ENCODE measurements at regions of chr20 and their contacts with region 1.

Region 1: DNA sequence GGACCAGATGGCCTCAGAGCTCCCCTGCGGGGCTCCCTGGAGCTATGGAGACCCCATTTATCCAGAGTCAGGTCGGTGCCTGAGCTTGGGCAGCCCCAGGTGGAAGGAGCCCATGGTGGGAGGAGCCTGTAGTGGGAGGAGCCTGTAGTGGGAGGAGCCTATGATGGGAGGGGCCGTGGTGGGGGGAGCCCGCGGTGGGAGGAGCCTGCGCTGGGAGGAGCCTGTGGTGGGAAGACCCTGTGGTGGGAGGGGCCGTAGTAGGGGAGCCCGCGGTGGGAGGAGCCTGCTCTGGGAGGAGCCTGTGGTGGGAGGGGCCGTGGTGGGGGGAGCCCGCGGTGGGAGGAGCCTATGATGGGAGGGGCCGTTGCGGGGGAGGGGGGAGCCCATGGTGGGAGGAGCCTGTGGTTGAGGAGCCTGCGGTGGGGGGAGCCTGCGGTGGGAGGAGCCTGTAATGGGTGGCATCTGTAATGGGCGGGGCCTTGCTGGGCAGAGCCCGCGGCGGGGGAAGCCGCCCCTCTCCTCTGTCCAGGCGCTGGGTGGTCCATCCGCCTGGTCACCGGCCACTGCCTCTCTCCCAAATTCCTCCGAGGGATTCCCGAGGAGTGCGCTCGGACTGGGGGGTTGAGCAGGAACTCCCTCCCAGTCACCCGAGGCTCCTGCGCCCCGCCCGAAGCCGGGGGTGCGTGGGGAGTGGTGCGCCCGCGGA is 579 bp upstream of the FNDC11 start:
- DNase-seq: peak; percentile 92
- ATAC-seq: peak; percentile 69
- H3K4me3 Mint-ChIP-seq: peak overlapping the region; percentile 78
- H3K27ac Mint-ChIP-seq: peak overlapping the region; percentile 91
- H3K4me1 Mint-ChIP-seq: peaks cover 7% of the 10 kb centered on the region
- H3K27me3 Mint-ChIP-seq: peaks cover 21% of the 10 kb centered on the region

Region 2: GRCh38 chr20:63425846-63426485 is 127.4 kb before region 1 on chr20:
- POLR2A ChIA-PET with region 1: no interaction called
- DNase-seq: no peak
- ATAC-seq: no peak
- H3K4me3 Mint-ChIP-seq: no peak overlapping the region
- H3K27ac Mint-ChIP-seq: no peak overlapping the region
- H3K4me1 Mint-ChIP-seq: no peaks in the 10 kb centered on the region
- H3K27me3 Mint-ChIP-seq: no peaks in the 10 kb centered on the region

Region 3: DNA sequence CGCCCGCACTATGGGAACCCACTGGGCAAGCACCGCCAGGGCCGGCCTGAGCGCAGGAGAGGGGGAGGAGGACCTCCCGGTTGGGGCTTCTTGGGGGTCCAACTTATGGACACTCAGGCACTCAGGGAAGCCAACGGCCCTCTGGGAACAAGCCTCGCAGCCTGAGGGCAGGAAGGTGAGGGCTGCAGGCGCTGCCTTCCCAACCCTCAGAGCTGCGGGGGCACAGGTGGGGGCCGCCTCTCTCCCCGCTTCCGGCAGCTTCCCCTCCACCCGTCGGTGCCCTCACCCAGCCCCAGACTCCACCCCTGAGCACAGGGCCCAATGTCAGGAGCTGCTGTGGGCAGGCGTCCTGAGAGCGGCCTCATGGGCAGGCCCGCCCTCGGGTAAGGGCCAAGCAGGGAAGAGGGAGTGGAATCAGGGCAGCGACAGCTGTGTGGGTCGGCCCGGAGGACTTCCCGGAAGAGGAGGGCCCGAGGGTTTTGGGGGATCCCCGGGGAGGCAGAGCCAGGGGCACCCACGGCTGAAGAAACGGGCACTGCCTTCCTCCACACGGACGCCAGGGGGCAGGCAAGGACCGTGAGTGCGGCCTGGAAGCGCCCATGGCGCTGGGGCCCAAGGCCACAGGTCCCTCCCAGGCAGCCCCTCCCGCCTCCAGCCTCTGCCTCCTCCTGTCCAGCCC is 15.7 kb before region 1 on chr20:
- POLR2A ChIA-PET with region 1: interaction called, 18 read pairs
- DNase-seq: peak; percentile 96
- ATAC-seq: peak; percentile 96
- H3K4me3 Mint-ChIP-seq: peak overlapping the region; percentile 76
- H3K27ac Mint-ChIP-seq: peak overlapping the region; percentile 93
- H3K4me1 Mint-ChIP-seq: no peaks in the 10 kb centered on the region
- H3K27me3 Mint-ChIP-seq: no peaks in the 10 kb centered on the region

Measured in activated naive CD8-positive, alpha-beta T cell treated with anti-CD3 and anti-CD28 coated beads, Interleukin-2, amount 10 ng/mL, durations not matched to agents 7 days and 5 days (primary cell).